CD8-positive, alpha-beta T cell (primary cell): ENCODE measurements at regions of chr12 and their contacts with region 1.

Region 1: DNA sequence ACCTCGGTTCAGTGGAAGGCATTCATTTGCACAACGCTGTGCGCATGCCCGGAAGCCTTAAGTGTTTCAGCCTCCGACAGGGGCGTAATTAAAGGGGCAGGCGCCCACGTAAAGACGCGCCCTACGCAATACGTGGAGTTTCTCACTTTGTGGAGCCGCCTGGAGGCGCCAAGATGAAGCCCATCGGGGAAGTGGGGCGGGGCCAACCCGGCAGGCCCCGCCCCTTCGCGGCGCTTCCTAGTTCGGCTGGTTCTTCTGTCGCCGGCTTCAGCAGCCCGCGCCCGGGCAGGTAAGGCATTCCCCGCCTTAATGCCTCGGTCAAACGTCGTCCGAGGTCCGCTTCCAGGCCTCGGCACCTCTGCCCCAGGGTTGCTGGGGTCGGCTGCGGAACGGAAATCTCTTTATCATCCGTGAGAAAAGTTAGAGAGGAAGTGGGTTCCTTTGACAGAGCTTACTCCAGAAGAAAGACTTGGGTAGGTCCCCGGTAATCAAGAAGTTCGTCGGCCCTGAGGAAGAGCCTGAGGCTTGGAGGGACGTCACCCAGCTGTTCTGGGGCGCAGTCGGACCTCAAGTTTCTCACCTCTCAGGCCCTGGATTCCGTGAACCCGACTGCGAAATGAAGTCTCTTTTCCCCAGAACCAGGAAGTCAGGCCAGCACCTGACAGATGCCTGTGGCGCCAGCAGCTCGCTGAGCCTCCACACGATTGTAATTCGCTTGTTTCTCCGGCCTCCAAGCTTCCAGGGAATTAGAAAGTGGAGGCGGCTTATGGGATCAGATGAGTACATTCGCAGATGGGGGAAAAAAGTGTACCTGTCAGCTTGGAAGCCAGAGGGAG is at the starts of genes IRAK4 and PUS7L:
- DNase-seq: peak; percentile 89 to 99 (median 95)
- ATAC-seq: peak; percentile 95
- H3K4me3 ChIP-seq: peak within 1 kb of the TSS; percentile 71 to 79
- H3K4me3 Mint-ChIP-seq: peak within 1 kb of the TSS; percentile 95
- H3K27ac ChIP-seq: peak within 1 kb of the TSS; percentile 80 to 96
- H3K27ac Mint-ChIP-seq: peak within 1 kb of the TSS; percentile 99
- H3K4me1 ChIP-seq: peaks cover 45% of the 10 kb centered on the region
- H3K4me1 Mint-ChIP-seq: peaks cover 77% of the 10 kb centered on the region
- H3K27me3 ChIP-seq: no peaks in the 10 kb centered on the region
- H3K27me3 Mint-ChIP-seq: no peaks in the 10 kb centered on the region
- CTCF ChIP-seq: no peak
- total RNA-seq, gene IRAK4: 19.6 to 22.3 TPM
- total RNA-seq, gene PUS7L: 10.3 to 12.6 TPM

Region 2: DNA sequence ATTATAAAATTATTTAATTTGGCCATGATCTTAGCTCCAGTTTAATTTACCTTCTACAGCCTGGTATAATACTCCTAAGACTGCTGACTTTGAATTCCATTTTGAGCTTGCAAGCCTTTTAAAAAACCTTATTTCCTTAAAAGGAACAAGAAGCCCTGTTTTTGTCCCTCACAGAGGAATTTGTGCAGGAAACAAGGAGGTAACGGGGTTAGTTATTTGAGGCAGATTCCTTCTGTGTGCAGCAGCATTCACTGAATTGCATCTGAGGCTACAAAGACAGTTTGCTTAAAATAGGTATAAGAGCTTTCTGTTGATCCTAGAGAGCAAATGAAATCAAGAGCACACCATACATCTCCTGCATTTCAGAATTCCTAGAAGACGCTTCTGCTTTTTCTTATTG is 766.1 kb before region 1 on chr12:
- CTCF ChIA-PET with region 1: no interaction called
- POLR2A ChIA-PET with region 1: no interaction called
- intact Hi-C with region 1: no loop called
- DNase-seq: no peak
- ATAC-seq: no peak
- H3K4me3 ChIP-seq: no peak overlapping the region
- H3K4me3 Mint-ChIP-seq: no peak overlapping the region
- H3K27ac ChIP-seq: no peak overlapping the region
- H3K27ac Mint-ChIP-seq: no peak overlapping the region
- H3K4me1 ChIP-seq: no peaks in the 10 kb centered on the region
- H3K4me1 Mint-ChIP-seq: no peaks in the 10 kb centered on the region
- H3K27me3 ChIP-seq: no peaks in the 10 kb centered on the region
- H3K27me3 Mint-ChIP-seq: no peaks in the 10 kb centered on the region
- CTCF ChIP-seq: no peak

Region 3: DNA sequence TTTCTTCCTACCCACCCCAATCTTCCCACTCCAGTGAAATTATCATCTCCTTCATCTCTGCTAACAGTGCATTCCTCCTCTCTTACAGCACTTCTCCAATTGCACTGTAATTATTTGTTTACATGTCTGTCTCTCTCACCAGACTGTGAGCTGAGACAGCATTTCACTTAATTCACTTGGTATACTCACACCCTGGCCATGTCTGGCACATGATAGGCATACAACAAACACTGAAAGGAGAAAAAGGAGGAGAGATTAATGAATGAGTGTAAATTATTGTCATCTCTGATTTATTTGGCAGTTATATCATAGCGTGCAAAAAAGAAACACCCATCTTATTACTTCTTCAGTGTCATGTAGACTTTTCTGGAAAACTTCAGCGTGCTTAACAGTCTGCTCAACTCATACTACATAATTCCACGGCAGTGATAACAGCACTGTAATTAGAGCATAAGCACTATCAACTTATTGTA is 659.2 kb before region 1 on chr12:
- CTCF ChIA-PET with region 1: no interaction called
- POLR2A ChIA-PET with region 1: no interaction called
- intact Hi-C with region 1: no loop called
- DNase-seq: no peak
- ATAC-seq: no peak
- H3K4me3 ChIP-seq: no peak overlapping the region
- H3K4me3 Mint-ChIP-seq: no peak overlapping the region
- H3K27ac ChIP-seq: no peak overlapping the region
- H3K27ac Mint-ChIP-seq: no peak overlapping the region
- H3K4me1 ChIP-seq: no peaks in the 10 kb centered on the region
- H3K4me1 Mint-ChIP-seq: no peaks in the 10 kb centered on the region
- H3K27me3 ChIP-seq: no peaks in the 10 kb centered on the region
- H3K27me3 Mint-ChIP-seq: no peaks in the 10 kb centered on the region
- CTCF ChIP-seq: no peak

Region 4: DNA sequence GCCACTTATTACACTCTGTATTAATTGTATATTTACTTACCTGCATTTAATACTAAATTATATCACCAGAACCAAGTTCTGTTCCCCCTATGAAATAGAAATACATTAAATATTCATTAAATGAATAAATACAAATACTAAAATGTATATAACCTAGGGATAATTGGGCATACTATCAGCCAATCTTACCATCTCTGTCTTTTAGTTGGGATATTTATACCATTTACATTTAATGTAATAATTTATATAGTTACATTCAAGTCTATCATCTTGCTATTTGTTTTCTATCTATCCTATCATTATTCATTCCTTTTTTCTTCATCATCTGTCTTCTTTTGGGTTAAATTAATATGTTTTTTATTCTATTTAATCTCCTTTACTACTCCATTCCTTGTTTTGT is 202.9 kb before region 1 on chr12:
- CTCF ChIA-PET with region 1: no interaction called
- POLR2A ChIA-PET with region 1: no interaction called
- intact Hi-C with region 1: no loop called
- DNase-seq: no peak
- ATAC-seq: no peak
- H3K4me3 ChIP-seq: no peak overlapping the region
- H3K4me3 Mint-ChIP-seq: no peak overlapping the region
- H3K27ac ChIP-seq: no peak overlapping the region
- H3K27ac Mint-ChIP-seq: no peak overlapping the region
- H3K4me1 ChIP-seq: no peaks in the 10 kb centered on the region
- H3K4me1 Mint-ChIP-seq: peaks cover 2% of the 10 kb centered on the region
- H3K27me3 ChIP-seq: no peaks in the 10 kb centered on the region
- H3K27me3 Mint-ChIP-seq: peaks cover 19% of the 10 kb centered on the region
- CTCF ChIP-seq: no peak

Region 5: DNA sequence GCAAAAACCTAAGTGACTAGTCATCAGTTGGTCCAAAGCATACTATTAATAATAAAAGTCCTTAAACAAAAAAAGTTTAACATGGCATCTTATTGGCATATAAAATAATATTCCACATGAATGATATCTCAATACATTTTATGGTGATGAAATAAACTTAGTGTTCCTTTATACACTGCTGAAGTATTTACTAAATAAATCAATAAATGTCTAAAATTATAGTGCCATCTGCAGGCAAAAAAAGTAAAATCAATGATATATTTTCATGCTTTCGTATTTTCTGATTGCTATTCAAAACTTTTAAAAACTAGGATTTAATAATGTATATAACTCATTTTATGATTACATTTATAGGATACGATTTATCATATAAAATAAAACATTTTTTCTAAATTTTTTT is 30.8 kb before region 1 on chr12:
- CTCF ChIA-PET with region 1: no interaction called
- POLR2A ChIA-PET with region 1: no interaction called
- intact Hi-C with region 1: no loop called
- DNase-seq: no peak
- ATAC-seq: no peak
- H3K4me3 ChIP-seq: no peak overlapping the region
- H3K4me3 Mint-ChIP-seq: no peak overlapping the region
- H3K27ac ChIP-seq: no peak overlapping the region
- H3K27ac Mint-ChIP-seq: no peak overlapping the region
- H3K4me1 ChIP-seq: no peaks in the 10 kb centered on the region
- H3K4me1 Mint-ChIP-seq: peaks cover 7% of the 10 kb centered on the region
- H3K27me3 ChIP-seq: no peaks in the 10 kb centered on the region
- H3K27me3 Mint-ChIP-seq: no peaks in the 10 kb centered on the region
- CTCF ChIP-seq: peak; percentile 31

Region 6: DNA sequence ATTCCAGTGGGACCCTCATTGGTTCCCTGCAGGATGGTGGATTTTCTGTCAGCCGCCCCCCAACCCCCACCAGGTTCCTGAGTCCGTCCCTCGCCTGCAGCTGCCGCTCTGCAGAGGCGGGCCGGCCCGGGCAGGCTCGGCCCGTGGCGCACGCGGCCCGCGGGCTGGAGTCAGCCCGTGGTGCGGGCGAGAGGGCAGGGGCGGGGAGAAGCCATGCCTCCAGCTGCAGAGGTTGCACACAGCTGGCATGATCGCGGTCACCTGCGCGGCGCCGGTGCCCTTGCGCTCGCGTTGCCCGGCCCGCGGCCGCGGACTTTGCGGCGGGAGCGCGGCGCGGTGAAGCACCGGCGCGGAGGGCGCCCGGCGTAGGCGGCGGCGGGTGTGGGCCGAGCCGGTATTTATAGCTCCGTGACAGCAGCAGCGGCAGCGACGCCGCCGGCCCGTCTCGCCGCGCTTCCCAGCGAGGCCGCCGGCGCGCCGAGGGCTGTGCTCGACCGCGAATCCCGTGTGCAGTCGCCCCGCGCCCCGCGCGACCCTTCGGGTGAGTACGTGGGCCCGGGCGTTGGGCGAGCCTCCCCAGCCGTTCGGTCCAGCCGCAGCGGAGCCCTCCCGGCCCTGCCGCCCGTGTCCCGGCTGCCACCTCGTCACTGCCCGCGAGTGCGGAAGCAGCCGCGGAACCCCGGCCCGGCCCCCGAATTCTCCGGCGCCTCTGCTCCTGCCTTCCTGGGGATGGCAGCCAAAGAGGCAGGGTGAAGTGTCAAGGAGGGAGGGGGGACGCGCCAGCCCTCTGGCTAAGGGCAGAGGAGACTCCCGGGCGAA is 76.9 kb after region 1 on chr12 and contains the start of gene TMEM117:
- CTCF ChIA-PET with region 1: no interaction called
- POLR2A ChIA-PET with region 1: interaction called, 18 read pairs
- intact Hi-C with region 1: loop called (anchors 2 kb)
- DNase-seq: peak; percentile 21 to 82 (median 65)
- ATAC-seq: peak; percentile 69
- H3K4me3 ChIP-seq: peak within 1 kb of the TSS; percentile 56 to 63
- H3K4me3 Mint-ChIP-seq: peak within 1 kb of the TSS; percentile 92
- H3K27ac ChIP-seq: peak within 1 kb of the TSS; percentile 64 to 78
- H3K27ac Mint-ChIP-seq: peak within 1 kb of the TSS; percentile 95
- H3K4me1 ChIP-seq: peaks cover 35% of the 10 kb centered on the region
- H3K4me1 Mint-ChIP-seq: peaks cover 52% of the 10 kb centered on the region
- H3K27me3 ChIP-seq: no peaks in the 10 kb centered on the region
- H3K27me3 Mint-ChIP-seq: no peaks in the 10 kb centered on the region
- CTCF ChIP-seq: no peak
- total RNA-seq, gene TMEM117: 3.5 to 4.0 TPM